Lower leg skin (tissue), 4 donors: ENCODE measurements at regions of chr22 and their contacts with region 1.

Region 1: GRCh38 chr22:41526837-41527799 is 17.2 kb downstream of the POLR3H start:
- DNase-seq: no peak
- H3K4me3 ChIP-seq: no peak overlapping the region
- CTCF ChIP-seq: peak in 1 of 3 donors; percentile 38
- POLR2A ChIP-seq: no peak

Region 2: GRCh38 chr22:41403532-41404318 is 123.4 kb before region 1 on chr22:
- intact Hi-C with region 1: loop called (anchors 5 kb)
- DNase-seq: peak; percentile 83 to 97
- H3K4me3 ChIP-seq: no peak overlapping the region
- CTCF ChIP-seq: peak in 1 of 3 donors; percentile 95
- POLR2A ChIP-seq: no peak